Activated T-helper 1 cell treated with anti-CD3 and anti-CD28 coated beads, Interleukin-12 subunit alpha, Interleukin-12 subunit beta, Interleukin-2, Interleukin-4 antibody, amounts not matched to agents 30 ng/mL and 10 ng/mL and 1 ng/mL, durations not matched to agents 14 hours and 24 hours and 36 hours (primary cell): ENCODE measurements at regions of chr4 and their contacts with region 1.

Region 1: DNA sequence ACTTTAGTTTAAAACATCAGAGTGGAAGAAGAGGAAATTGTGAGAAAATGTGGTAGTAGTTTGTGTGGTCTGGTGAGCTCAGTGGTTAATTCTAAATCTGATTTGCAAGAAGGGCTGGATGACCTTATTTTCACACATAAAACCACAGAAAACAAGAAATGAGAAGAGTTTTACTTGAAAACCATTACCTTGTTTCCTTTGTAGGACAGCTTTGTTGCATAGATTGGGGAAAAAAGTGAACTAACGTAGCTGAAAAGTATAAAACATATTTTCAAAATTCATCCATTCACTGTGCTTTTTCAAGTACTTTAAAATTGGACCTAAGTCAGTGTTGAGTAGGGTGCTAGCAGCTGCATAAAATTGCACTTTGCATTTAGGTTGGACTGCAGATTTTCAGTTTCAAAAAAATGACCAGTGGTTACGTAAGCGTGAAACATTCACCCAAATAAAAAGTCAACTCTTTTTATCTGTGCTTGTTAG is 211.3 kb downstream of the ARHGAP10 start:
- DNase-seq: no peak
- H3K4me3 Mint-ChIP-seq: peak overlapping the region; percentile 17
- H3K27ac Mint-ChIP-seq: peak overlapping the region; percentile 36
- H3K4me1 Mint-ChIP-seq: peaks cover 37% of the 10 kb centered on the region
- H3K27me3 Mint-ChIP-seq: peaks cover 6% of the 10 kb centered on the region

Region 2: GRCh38 chr4:147285751-147286150 is 657.4 kb before region 1 on chr4:
- intact Hi-C with region 1: no loop called
- DNase-seq: no peak
- H3K4me3 Mint-ChIP-seq: no peak overlapping the region
- H3K27ac Mint-ChIP-seq: no peak overlapping the region
- H3K4me1 Mint-ChIP-seq: no peaks in the 10 kb centered on the region
- H3K27me3 Mint-ChIP-seq: no peaks in the 10 kb centered on the region

Region 3: GRCh38 chr4:147617173-147617840 is 325.9 kb before region 1 on chr4 and contains the start of gene TMEM184C:
- intact Hi-C with region 1: loop called (anchors 5 kb)
- DNase-seq: peak; percentile 97
- H3K4me3 Mint-ChIP-seq: peak within 1 kb of the TSS; percentile 92
- H3K27ac Mint-ChIP-seq: peak within 1 kb of the TSS; percentile 89
- H3K4me1 Mint-ChIP-seq: peaks cover 26% of the 10 kb centered on the region
- H3K27me3 Mint-ChIP-seq: peaks cover 7% of the 10 kb centered on the region
- total RNA-seq, gene TMEM184C: 21.6 and 22.7 TPM in 2 replicates

Region 4: GRCh38 chr4:147799986-147800555 is 143.1 kb before region 1 on chr4:
- intact Hi-C with region 1: loop called (anchors 1 kb)
- DNase-seq: peak; percentile 70
- H3K4me3 Mint-ChIP-seq: peak overlapping the region; percentile 65
- H3K27ac Mint-ChIP-seq: peak overlapping the region; percentile 66
- H3K4me1 Mint-ChIP-seq: peaks cover 58% of the 10 kb centered on the region
- H3K27me3 Mint-ChIP-seq: peaks cover 5% of the 10 kb centered on the region

Region 5: GRCh38 chr4:147843162-147843561 is 100.0 kb before region 1 on chr4:
- intact Hi-C with region 1: loop called (anchors 2 kb)
- DNase-seq: no peak
- H3K4me3 Mint-ChIP-seq: no peak overlapping the region
- H3K27ac Mint-ChIP-seq: no peak overlapping the region
- H3K4me1 Mint-ChIP-seq: no peaks in the 10 kb centered on the region
- H3K27me3 Mint-ChIP-seq: peaks cover 21% of the 10 kb centered on the region

Region 6: GRCh38 chr4:147909225-147909624 is 34.0 kb before region 1 on chr4:
- intact Hi-C with region 1: no loop called
- DNase-seq: no peak
- H3K4me3 Mint-ChIP-seq: no peak overlapping the region
- H3K27ac Mint-ChIP-seq: no peak overlapping the region
- H3K4me1 Mint-ChIP-seq: no peaks in the 10 kb centered on the region
- H3K27me3 Mint-ChIP-seq: no peaks in the 10 kb centered on the region

Region 7: DNA sequence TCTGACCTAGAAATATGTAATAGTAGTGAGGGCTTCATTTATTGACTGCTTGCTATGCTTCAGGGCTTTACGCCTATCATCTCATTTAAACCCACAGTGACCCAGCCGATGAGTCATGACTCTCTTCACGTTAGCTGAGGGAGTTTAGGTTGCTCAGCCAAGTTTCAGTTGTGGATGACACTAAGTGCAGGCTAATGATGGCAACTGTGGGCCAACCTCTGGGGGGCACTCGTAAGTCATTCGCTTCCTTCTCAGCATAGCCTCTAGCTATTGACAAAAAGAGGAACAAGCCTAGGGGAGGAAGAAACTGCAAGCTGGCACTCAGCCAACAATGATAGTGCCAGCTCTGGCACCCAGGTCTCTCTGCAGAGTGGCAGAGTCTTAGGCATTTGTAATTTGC is 113.7 kb after region 1 on chr4:
- intact Hi-C with region 1: loop called (anchors 2 kb)
- DNase-seq: peak; percentile 34
- H3K4me3 Mint-ChIP-seq: no peak overlapping the region
- H3K27ac Mint-ChIP-seq: no peak overlapping the region
- H3K4me1 Mint-ChIP-seq: peaks cover 91% of the 10 kb centered on the region
- H3K27me3 Mint-ChIP-seq: no peaks in the 10 kb centered on the region

Region 8: GRCh38 chr4:148216866-148217814 is 273.9 kb after region 1 on chr4:
- intact Hi-C with region 1: loop called (anchors 2 kb)
- DNase-seq: peak; percentile 37
- H3K4me3 Mint-ChIP-seq: peak overlapping the region; percentile 51
- H3K27ac Mint-ChIP-seq: peak overlapping the region; percentile 48
- H3K4me1 Mint-ChIP-seq: peaks cover 18% of the 10 kb centered on the region
- H3K27me3 Mint-ChIP-seq: no peaks in the 10 kb centered on the region

Region 9: GRCh38 chr4:148735432-148736155 is 792.4 kb after region 1 on chr4:
- intact Hi-C with region 1: loop called (anchors 5 kb)
- DNase-seq: no peak
- H3K4me3 Mint-ChIP-seq: no peak overlapping the region
- H3K27ac Mint-ChIP-seq: no peak overlapping the region
- H3K4me1 Mint-ChIP-seq: no peaks in the 10 kb centered on the region
- H3K27me3 Mint-ChIP-seq: no peaks in the 10 kb centered on the region